ENCODE measurements at regions of chr13 and their contacts with region 1.

Region 1: DNA sequence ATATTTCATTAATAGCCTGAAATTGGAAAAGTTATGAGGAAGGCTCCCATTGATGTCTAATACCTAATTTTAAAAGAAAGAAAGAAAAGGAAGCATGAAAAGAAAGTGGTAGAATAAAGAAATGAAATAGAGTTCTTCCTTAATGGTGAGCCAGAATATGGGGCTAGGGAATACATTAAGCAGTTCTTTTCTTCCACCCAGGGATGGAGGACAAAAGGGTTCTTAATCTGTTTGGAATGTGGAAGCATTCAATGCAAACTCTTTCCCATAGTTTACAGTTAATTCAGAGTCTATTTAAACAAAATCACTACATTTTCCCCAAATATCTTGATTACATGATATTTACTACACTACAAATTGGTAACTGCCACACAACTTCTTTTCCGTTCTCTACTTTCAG is 18.4 kb upstream of the ZMYM2 start:
- DNase-seq: no peak
- ATAC-seq: no peak
- H3K4me3 ChIP-seq: no peak overlapping the region
- H3K27ac ChIP-seq: no peak overlapping the region
- H3K4me1 ChIP-seq: no peaks in the 10 kb centered on the region
- H3K27me3 ChIP-seq: peaks cover 0 to 9% (median 0%) of the 10 kb centered on the region in 7 donors
- CTCF ChIP-seq: no peak

Region 2: GRCh38 chr13:19171563-19171962 is 768.5 kb before region 1 on chr13:
- intact Hi-C with region 1: no loop called
- DNase-seq: no peak
- ATAC-seq: no peak
- H3K4me3 ChIP-seq: no peak overlapping the region
- H3K27ac ChIP-seq: no peak overlapping the region
- H3K4me1 ChIP-seq: no peaks in the 10 kb centered on the region
- H3K27me3 ChIP-seq: peaks cover 0 to 7% (median 0%) of the 10 kb centered on the region in 7 donors
- CTCF ChIP-seq: no peak

Region 3: DNA sequence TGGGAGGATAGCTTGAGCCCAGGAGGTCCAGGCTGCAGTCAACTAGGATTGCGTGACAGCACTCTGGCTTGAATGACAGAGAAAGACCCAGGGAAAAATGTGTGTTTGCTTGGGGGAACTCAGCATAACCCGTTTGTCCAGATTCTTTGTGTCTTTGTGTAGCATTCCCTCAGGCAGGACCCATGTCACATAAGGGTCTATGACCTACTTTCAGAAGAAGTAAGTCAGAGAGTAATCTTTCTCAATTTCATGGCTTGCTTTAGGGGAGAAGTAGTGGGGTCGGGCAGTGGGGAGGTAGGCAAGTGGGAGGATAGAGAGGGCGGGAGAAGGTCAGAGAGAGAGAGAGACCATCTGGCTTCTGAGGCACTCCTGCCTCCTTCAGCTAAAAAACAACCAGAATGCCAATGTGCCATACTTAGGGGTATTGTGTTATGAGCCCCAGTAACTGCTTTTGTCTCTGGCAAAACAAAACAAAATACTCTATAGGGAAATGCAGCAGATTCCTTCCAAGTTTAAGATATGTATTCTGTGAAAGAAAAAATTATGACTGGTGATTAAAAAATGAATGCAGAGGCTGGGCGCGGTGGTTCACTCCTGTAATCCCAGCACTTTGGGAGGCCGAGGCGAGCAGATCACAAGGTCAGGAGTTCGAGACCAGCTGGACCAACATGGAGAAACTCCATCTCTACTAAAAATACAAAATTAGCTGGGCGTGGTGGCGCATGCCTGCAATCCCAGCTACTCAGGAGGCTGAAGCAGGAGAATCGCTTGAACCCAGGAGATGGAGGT is 145.3 kb before region 1 on chr13:
- intact Hi-C with region 1: loop called in 1 of 10 experiments (anchors 10 kb)
- DNase-seq: no peak
- ATAC-seq: no peak
- H3K4me3 ChIP-seq: no peak overlapping the region
- H3K27ac ChIP-seq: peak overlapping the region in 1 of 10 donors; percentile 68
- H3K4me1 ChIP-seq: peaks cover 0 to 15% (median 0%) of the 10 kb centered on the region in 9 donors
- H3K27me3 ChIP-seq: no peaks in the 10 kb centered on the region
- CTCF ChIP-seq: no peak